Mammary epithelial cell (primary cell): ENCODE measurements at regions of chr3 and their contacts with region 1.

Region 1: GRCh38 chr3:52220380-52221026 is 4.9 kb downstream of the TLR9 start:
- DNase-seq: peak; percentile 53
- H3K4me3 ChIP-seq: no peak overlapping the region
- H3K27ac ChIP-seq: no peak overlapping the region
- H3K4me1 ChIP-seq: peaks cover 28% of the 10 kb centered on the region
- H3K27me3 ChIP-seq: no peaks in the 10 kb centered on the region
- CTCF ChIP-seq: peak; percentile 94 to 96

Region 2: GRCh38 chr3:51941798-51942602 is 278.5 kb before region 1 on chr3 and contains the starts of genes PARP3 and RRP9:
- CTCF ChIA-PET with region 1: no interaction called
- dilution Hi-C with region 1: no loop called
- in situ Hi-C with region 1: no loop called
- intact Hi-C with region 1: loop called (anchors 5 kb)
- DNase-seq: peak; percentile 100
- H3K4me3 ChIP-seq: peak within 1 kb of the TSS; percentile 62 to 80 (median 73)
- H3K27ac ChIP-seq: peak within 1 kb of the TSS; percentile 38
- H3K4me1 ChIP-seq: peaks cover 21% of the 10 kb centered on the region
- H3K27me3 ChIP-seq: no peaks in the 10 kb centered on the region
- CTCF ChIP-seq: peak; percentile 98 to 100
- total RNA-seq, gene PARP3: 16.1 to 19.7 TPM
- total RNA-seq, gene RRP9: 22.3 to 44.5 TPM

Region 3: DNA sequence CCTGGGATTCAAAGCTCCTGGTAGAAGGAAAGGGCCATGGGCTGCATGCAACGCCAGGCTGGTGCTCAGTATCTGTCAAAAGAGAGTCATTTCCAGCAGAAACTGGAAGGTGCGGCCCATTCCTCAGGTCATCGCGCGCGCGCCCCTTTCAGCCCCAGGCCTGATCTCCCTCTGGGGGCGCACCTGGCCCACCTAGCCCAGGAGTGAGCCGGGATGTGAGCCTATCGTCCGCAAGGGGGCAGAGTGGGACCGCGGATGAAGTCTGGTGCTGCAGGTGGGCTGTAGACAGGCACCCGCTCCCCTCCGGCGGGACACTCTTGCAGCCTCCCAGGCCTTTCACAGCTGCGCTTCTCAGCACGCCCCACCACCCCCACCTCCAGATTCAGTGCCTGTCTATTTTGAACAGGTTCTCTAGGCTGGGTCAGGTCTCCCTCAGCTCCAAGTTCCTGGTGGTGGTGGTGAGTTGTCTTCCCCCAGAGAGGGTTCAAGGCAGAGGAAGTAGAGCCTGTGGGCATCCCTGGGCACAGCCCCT is 219.0 kb before region 1 on chr3:
- CTCF ChIA-PET with region 1: no interaction called
- dilution Hi-C with region 1: no loop called
- in situ Hi-C with region 1: no loop called
- intact Hi-C with region 1: loop called (anchors 5 kb)
- DNase-seq: peak; percentile 49
- H3K4me3 ChIP-seq: no peak overlapping the region
- H3K27ac ChIP-seq: no peak overlapping the region
- H3K4me1 ChIP-seq: peaks cover 35% of the 10 kb centered on the region
- H3K27me3 ChIP-seq: no peaks in the 10 kb centered on the region
- CTCF ChIP-seq: peak; percentile 75 to 90

Region 4: DNA sequence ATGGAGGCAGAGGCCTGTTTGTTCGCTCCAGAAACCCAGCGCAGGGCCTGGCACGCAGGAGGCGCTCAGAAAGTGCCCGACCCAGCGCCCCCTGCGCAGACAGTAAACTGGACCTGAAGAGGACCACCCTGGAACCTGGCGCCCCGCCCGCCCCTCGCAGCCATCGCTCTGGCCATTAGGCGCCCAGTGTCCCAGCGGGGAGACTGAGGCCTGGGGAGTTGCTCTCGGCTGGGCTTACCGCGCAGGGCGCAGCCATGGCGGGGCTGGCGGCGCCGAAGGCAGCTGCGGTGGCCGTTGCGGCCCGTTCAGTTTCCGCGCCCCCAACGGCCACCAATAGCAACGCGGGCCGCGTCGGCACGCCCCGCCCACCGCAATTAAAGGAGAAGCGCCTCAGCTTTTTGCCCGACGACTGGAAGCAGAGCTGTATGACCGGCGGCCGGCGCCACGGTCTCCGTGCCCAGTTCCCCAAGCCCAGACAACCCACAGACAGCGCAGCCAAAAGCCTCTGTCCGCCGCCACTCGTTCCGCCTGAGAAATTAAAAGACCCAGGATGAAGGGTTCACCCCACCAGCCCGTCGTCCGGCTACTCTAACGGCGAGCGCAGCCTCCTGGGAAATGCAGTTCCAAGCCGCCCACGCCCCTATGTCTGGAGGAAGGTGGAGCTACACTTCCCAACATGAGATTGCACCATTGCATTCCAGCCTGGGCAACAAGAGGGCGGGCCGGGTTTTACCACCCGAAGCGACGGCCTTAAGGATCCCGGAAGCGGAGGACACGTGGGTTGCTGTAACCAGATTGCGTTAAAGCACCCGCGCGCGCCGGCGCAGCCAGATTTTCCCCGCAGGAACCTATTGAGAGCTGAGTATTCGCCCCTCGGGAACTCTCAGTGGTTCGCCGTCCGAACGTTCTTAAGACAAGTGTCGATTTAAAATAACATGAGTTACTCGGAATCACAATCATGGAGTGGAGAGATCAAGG is 66.1 kb before region 1 on chr3 and contains the start of gene POC1A:
- CTCF ChIA-PET with region 1: interaction called, 3 read pairs
- dilution Hi-C with region 1: no loop called
- in situ Hi-C with region 1: no loop called
- intact Hi-C with region 1: loop called (anchors 2 kb)
- DNase-seq: peak; percentile 97
- H3K4me3 ChIP-seq: peak within 1 kb of the TSS; percentile 58 to 77 (median 73)
- H3K27ac ChIP-seq: peak within 1 kb of the TSS; percentile 55
- H3K4me1 ChIP-seq: peaks cover 19% of the 10 kb centered on the region
- H3K27me3 ChIP-seq: no peaks in the 10 kb centered on the region
- CTCF ChIP-seq: no peak
- total RNA-seq, gene POC1A: 2.8 to 21.5 TPM

Region 5: GRCh38 chr3:52317208-52318000 is 96.9 kb after region 1 on chr3:
- CTCF ChIA-PET with region 1: interaction called, 16 read pairs
- dilution Hi-C with region 1: no loop called
- in situ Hi-C with region 1: no loop called
- intact Hi-C with region 1: no loop called
- DNase-seq: peak; percentile 33
- H3K4me3 ChIP-seq: peak overlapping the region in 2 of 3 experiments; percentile 4 to 17
- H3K27ac ChIP-seq: no peak overlapping the region
- H3K4me1 ChIP-seq: peaks cover 17% of the 10 kb centered on the region
- H3K27me3 ChIP-seq: no peaks in the 10 kb centered on the region
- CTCF ChIP-seq: no peak

Region 6: DNA sequence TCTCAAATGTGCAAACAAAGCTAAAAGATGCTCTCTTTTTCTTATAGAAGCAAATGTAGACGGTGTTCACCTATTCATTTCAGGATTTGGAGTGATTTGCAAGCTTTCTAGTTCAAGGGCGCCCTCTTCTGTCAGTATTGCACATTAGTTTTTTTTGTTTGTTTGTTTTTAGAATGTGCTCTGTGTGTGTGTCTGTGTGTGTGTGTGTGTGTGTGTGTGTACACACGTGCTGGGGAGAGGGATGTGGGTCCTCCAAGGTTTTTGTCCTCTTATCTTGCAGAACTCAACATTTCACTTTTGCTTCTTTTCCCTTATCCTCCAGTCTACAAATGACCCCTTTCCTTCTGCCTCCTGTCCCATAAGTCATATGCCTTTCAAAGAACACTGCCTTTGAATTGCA is 119.1 kb after region 1 on chr3:
- CTCF ChIA-PET with region 1: no interaction called
- dilution Hi-C with region 1: no loop called
- in situ Hi-C with region 1: no loop called
- intact Hi-C with region 1: loop called (anchors 1 kb)
- DNase-seq: peak; percentile 60
- H3K4me3 ChIP-seq: no peak overlapping the region
- H3K27ac ChIP-seq: no peak overlapping the region
- H3K4me1 ChIP-seq: no peaks in the 10 kb centered on the region
- H3K27me3 ChIP-seq: no peaks in the 10 kb centered on the region
- CTCF ChIP-seq: peak; percentile 53 to 72

Region 7: GRCh38 chr3:52524752-52525679 is 304.5 kb after region 1 on chr3:
- CTCF ChIA-PET with region 1: no interaction called
- dilution Hi-C with region 1: no loop called
- in situ Hi-C with region 1: no loop called
- intact Hi-C with region 1: no loop called
- DNase-seq: no peak
- H3K4me3 ChIP-seq: no peak overlapping the region
- H3K27ac ChIP-seq: no peak overlapping the region
- H3K4me1 ChIP-seq: peaks cover 7% of the 10 kb centered on the region
- H3K27me3 ChIP-seq: no peaks in the 10 kb centered on the region
- CTCF ChIP-seq: no peak